GM12878 (cell line): ENCODE measurements at regions of chr10 and their contacts with region 1.

Region 1: DNA sequence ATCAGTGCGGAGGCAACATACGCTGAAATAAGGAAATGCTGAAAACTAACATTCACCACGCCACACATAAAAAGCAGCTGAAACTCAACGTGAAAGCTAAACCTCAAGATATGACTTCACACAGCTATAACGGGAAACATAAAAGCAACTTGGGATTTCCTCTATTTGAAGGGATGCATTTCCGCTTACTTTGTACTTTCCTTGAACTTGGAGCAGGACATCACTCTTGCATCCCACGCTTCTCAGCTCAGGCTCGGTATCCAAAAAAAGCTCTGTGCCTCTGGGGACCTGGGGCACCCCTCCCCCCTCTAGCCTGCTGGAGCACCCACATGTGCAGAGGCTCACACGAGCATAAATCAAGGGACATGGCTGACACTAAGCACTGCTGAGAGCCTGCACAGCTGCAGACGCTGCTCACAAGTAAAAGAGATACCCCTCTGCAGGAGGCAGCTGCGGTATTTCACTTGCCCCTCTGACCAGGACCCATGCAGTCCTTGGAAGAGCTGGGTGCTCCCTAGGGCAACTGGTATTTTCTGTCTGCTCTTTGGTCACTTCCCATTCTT is 34.2 kb downstream of the PARD3 start:
- DNase-seq: peak; percentile 47
- ATAC-seq: peak; percentile 88
- H3K4me3 ChIP-seq: peak overlapping the region; percentile 58
- H3K27ac ChIP-seq: peak overlapping the region; percentile 1; the same call in 1 of the 2 replicates
- H3K4me1 ChIP-seq: peaks cover 13% of the 10 kb centered on the region
- H3K27me3 ChIP-seq: no peaks in the 10 kb centered on the region
- CTCF ChIP-seq: no peak
- EP300 ChIP-seq: peak; percentile 27 to 37; a peak in 2 of 4 replicates
- POLR2A ChIP-seq: peak; percentile 44; the same call in 1 of the 2 replicates
- RAD21 ChIP-seq: no peak

Region 2: DNA sequence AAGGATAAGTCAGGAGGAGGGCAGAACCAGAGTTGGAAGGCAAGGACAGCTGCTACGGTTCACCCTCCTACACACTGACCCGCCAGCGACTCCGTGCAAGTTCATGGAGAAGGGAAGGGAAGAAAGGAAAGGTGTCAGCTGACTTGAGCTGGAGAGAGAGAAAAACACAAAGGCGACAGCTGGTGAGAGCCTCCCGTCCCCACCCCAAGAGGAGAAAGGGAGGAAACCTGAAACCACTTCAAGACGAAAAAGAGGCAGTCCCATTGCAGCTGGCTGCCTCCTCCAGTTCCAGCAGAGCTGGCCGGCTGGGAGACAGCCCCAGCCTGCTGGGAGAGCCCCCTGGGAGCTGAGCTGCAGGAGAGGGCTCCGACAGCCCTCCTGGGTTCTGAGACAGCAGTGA is 41.0 kb before region 1 on chr10:
- CTCF ChIA-PET with region 1: interaction called, 3 read pairs
- POLR2A ChIA-PET with region 1: no interaction called
- RAD21 ChIA-PET with region 1: interaction called, 6 read pairs
- SMC1A ChIA-PET with region 1: interaction called, 18 read pairs
- in situ Hi-C with region 1: no loop called
- intact Hi-C with region 1: no loop called
- DNase-seq: no peak
- ATAC-seq: peak; percentile 28
- H3K4me3 ChIP-seq: no peak overlapping the region
- H3K27ac ChIP-seq: no peak overlapping the region
- H3K4me1 ChIP-seq: no peaks in the 10 kb centered on the region
- H3K27me3 ChIP-seq: peaks cover 0 to 11% of the 10 kb centered on the region in 2 experiments; a peak in 2 of 4 replicates
- CTCF ChIP-seq: no peak
- EP300 ChIP-seq: no peak
- POLR2A ChIP-seq: no peak
- RAD21 ChIP-seq: no peak

Region 3: DNA sequence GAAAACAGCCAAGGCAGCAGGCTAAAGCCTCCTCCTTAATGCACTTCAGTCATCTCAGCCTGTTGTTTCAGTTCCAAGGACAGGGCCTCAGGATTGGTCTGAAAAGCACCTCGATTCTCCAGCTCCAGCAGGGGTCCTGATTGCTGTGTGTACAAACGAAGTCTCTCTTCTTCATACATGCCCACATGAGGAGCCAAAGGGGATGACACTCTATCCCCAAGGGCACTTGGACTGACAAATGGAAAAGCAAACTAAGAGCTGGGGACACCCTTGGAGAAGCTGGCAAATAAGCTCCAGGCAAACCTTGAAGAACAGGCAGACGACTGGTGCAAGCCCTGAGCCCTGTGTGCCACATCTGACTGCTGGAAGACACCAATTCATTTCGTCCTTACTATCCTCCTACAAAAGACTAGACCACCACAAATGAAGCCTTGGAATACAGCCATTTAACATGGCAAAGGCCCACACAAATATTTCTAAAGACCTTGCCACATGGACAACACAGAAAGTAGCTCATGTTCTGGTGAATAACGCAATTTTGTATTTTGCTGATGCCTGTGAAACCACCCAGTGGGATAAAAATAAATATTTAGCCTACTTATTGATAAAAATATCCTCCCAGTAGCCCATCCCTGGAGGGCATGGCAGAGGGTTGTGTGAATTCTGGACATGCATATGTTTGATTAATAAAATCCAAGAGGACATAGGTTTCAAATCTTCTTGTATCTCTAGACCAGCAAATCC is 27.7 kb before region 1 on chr10:
- CTCF ChIA-PET with region 1: interaction called, 11 read pairs
- POLR2A ChIA-PET with region 1: interaction called, 8 read pairs
- RAD21 ChIA-PET with region 1: interaction called, 18 read pairs
- SMC1A ChIA-PET with region 1: interaction called, 52 read pairs
- in situ Hi-C with region 1: no loop called
- intact Hi-C with region 1: no loop called
- DNase-seq: no peak
- ATAC-seq: no peak
- H3K4me3 ChIP-seq: no peak overlapping the region
- H3K27ac ChIP-seq: no peak overlapping the region
- H3K4me1 ChIP-seq: no peaks in the 10 kb centered on the region
- H3K27me3 ChIP-seq: no peaks in the 10 kb centered on the region; a peak in 2 of 4 replicates
- CTCF ChIP-seq: no peak
- EP300 ChIP-seq: no peak
- POLR2A ChIP-seq: no peak
- RAD21 ChIP-seq: no peak

Region 4: DNA sequence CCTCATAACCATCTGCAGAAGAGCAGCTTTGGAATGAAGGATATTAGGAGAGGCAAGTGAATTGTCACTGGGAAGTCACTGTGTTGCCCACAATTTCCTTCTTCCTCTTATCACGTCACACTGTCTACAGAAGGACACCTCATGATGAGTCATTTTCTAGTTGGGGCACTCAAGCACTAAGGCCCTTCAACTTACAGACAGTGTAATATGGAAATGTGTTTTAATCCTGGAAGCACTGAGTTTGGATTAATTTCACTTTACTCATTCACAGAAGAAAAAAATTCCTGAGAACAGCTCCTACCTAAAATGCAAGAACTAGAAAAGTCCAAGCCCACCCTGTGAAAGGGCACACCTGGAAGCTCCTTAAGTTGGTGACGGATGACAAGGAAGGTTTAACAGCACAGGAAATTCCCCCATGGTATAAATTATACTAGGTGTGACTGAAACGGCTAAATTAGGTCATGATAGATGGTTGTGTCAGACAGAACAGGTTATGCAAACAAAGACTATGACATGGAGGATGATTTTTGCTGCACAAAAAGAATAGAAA is 22.4 kb before region 1 on chr10:
- CTCF ChIA-PET with region 1: interaction called, 11 read pairs
- POLR2A ChIA-PET with region 1: interaction called, 8 read pairs
- RAD21 ChIA-PET with region 1: interaction called, 18 read pairs
- SMC1A ChIA-PET with region 1: interaction called, 52 read pairs
- in situ Hi-C with region 1: no loop called
- intact Hi-C with region 1: no loop called
- DNase-seq: peak; percentile 34
- ATAC-seq: peak; percentile 76
- H3K4me3 ChIP-seq: no peak overlapping the region
- H3K27ac ChIP-seq: no peak overlapping the region
- H3K4me1 ChIP-seq: no peaks in the 10 kb centered on the region
- H3K27me3 ChIP-seq: no peaks in the 10 kb centered on the region
- CTCF ChIP-seq: no peak
- EP300 ChIP-seq: no peak
- POLR2A ChIP-seq: no peak
- RAD21 ChIP-seq: no peak

Region 5: DNA sequence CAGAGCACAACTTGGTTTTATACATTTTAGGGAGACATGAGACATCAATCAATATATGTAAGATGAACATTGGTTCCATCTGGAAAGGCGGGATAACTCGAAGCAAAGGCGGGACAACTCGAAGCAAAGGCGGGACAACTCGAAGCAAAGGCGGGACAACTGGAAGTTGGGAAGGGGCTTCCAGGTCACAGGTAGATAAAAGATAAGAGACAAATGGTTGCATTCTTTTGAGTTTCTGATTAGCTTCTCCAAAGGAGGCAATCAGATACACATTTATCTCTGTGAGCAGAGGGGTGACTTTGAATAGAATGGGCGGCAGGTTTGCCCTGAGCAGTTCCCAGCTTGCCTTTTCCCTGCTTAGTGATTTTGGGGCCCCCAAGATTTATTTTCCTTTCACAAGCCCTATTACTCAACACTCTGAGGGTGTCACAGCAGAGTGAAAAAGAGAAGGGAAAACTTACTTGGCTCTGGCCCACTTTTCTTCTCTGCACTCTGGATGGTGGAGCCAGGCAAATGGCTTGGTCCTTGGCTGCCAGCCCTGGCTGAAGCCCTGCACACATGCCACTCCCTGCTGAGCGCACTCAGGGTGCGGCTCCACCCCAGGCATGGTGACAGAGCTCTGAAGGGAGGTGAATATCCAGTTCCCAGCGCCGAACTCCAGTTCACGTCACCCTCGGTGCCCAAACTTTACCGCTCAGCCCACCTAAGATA is 12.5 kb before region 1 on chr10:
- CTCF ChIA-PET with region 1: interaction called, 9 read pairs
- POLR2A ChIA-PET with region 1: interaction called, 8 read pairs
- RAD21 ChIA-PET with region 1: interaction called, 4 read pairs
- SMC1A ChIA-PET with region 1: interaction called, 27 read pairs
- in situ Hi-C with region 1: no loop called
- intact Hi-C with region 1: no loop called
- DNase-seq: no peak
- ATAC-seq: peak; percentile 11; the same call in 1 of the 3 replicates
- H3K4me3 ChIP-seq: no peak overlapping the region
- H3K27ac ChIP-seq: no peak overlapping the region
- H3K4me1 ChIP-seq: no peaks in the 10 kb centered on the region
- H3K27me3 ChIP-seq: no peaks in the 10 kb centered on the region
- CTCF ChIP-seq: no peak
- EP300 ChIP-seq: no peak
- POLR2A ChIP-seq: no peak
- RAD21 ChIP-seq: no peak

Region 6: DNA sequence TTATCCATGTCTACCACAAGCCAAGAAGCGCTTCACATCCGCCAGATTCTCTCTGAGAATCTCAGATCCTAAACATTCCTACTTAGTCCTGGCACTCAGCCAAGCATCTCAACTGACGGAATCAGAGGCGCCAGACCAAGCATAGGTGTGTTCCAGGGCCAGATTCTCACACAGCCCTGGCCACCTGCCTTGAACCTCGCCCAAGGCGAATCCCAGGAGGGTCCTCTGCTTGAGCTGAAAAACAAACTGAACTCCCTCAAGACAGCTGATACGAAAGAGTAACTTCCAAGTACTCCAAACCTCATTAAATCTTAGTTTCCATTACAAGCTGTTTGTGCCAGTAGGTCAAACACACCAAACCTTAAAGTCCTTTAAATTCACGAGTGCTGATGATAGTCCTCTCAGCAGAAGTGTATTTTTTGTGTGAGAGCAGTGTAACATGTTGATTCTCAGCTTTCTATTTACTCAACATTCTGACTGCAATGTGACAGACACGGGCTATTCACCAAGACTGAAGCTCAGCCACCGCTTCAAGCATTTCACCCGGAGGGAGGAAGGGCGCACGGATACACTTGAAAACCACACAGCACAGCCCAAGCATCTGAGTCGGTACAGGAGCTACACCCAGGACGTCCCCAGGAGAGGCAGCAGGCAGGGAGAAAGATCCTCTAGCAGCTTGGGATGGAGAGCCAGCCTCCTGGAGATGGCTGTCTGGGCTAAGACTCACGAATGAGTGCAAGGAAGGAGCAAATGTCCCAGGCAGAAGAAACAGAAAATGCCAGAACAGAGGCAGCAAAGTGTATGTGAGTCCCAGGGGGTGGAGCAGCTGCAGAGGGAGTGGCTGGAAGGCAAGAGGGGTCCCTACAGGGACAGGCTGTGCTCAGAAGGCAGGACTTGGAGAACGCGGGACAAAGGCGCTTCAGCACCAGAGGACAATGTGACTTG is 28.2 kb after region 1 on chr10:
- CTCF ChIA-PET with region 1: interaction called, 8 read pairs
- POLR2A ChIA-PET with region 1: interaction called, 19 read pairs
- RAD21 ChIA-PET with region 1: interaction called, 19 read pairs
- SMC1A ChIA-PET with region 1: interaction called, 67 read pairs
- in situ Hi-C with region 1: no loop called
- intact Hi-C with region 1: no loop called
- DNase-seq: no peak
- ATAC-seq: peak; percentile 67
- H3K4me3 ChIP-seq: no peak overlapping the region; the same call in 1 of the 2 replicates
- H3K27ac ChIP-seq: no peak overlapping the region
- H3K4me1 ChIP-seq: no peaks in the 10 kb centered on the region
- H3K27me3 ChIP-seq: peaks cover 0 to 8% of the 10 kb centered on the region in 2 experiments; a peak in 3 of 4 replicates
- CTCF ChIP-seq: no peak
- EP300 ChIP-seq: no peak
- POLR2A ChIP-seq: no peak
- RAD21 ChIP-seq: no peak

Region 7: DNA sequence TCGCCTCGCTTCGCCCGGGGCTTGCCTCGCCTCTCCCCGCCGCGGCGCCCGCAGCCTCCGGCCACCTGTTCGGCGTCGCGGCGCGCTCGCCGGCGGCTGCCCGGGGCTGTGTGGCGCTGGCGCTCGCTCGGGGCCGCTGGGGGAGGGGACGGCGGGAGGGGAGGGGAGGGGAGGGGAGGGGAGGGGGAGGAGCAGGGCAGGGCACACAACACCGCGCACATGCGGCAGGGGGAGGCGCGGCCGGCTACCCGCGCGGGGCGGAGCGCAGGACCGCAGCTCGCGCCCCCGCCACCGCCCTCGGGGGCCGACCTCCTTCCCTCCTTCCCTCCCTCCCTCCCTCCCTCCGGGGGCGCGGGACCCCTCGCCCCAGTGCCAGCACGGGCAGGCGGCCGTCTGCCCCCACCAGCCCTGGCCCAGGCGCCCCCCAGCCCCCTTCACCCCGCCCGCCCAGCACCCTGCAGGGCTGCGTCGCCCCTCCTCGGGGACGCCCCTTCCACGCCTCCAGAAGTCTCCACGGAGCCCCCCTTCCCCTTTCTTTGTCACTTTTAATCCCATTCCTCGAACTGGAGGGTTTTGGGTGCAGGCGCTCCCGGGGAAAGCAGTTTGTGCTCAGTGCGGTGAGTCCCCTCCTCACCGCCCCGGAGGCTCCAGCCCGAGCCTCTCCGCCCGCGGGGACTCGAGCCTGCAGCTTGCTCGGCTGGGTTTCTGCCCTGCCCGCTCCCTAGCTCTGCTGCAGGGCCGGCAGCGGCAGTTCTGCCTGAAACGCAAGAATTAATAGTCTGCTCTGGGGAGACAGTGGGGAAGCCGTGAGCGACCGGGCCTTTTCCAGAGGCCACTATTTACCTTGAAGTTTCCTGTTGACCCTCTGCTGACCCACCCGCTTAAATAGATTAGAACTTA is 34.5 kb after region 1 on chr10 and contains the start of gene PARD3:
- CTCF ChIA-PET with region 1: interaction called, 4 read pairs
- POLR2A ChIA-PET with region 1: interaction called, 19 read pairs
- RAD21 ChIA-PET with region 1: interaction called, 19 read pairs
- SMC1A ChIA-PET with region 1: interaction called, 67 read pairs
- in situ Hi-C with region 1: no loop called
- intact Hi-C with region 1: no loop called
- DNase-seq: no peak
- ATAC-seq: peak; percentile 70
- H3K4me3 ChIP-seq: peak within 1 kb of the TSS; percentile 41; the same call in 1 of the 2 replicates
- H3K27ac ChIP-seq: no peak within 1 kb of the TSS
- H3K4me1 ChIP-seq: no peaks in the 10 kb centered on the region
- H3K27me3 ChIP-seq: peaks cover 0 to 15% of the 10 kb centered on the region in 2 experiments; a peak in 3 of 4 replicates
- CTCF ChIP-seq: no peak
- EP300 ChIP-seq: no peak
- POLR2A ChIP-seq: no peak
- RAD21 ChIP-seq: no peak
- polyA plus RNA-seq, gene PARD3: 6.3 to 9.6 TPM

Region 8: GRCh38 chr10:34931223-34931622 is 150.3 kb after region 1 on chr10:
- CTCF ChIA-PET with region 1: no interaction called
- POLR2A ChIA-PET with region 1: no interaction called
- RAD21 ChIA-PET with region 1: no interaction called
- SMC1A ChIA-PET with region 1: no interaction called
- in situ Hi-C with region 1: no loop called
- intact Hi-C with region 1: no loop called
- DNase-seq: no peak
- ATAC-seq: no peak
- H3K4me3 ChIP-seq: no peak overlapping the region
- H3K27ac ChIP-seq: no peak overlapping the region
- H3K4me1 ChIP-seq: no peaks in the 10 kb centered on the region
- H3K27me3 ChIP-seq: no peaks in the 10 kb centered on the region
- CTCF ChIP-seq: no peak
- EP300 ChIP-seq: no peak
- POLR2A ChIP-seq: no peak
- RAD21 ChIP-seq: no peak